T-cell (primary cell): ENCODE measurements at regions of chr17 and their contacts with region 1.

Region 1: GRCh38 chr17:68457539-68458259 is 403 bp upstream of the WIPI1 start:
- DNase-seq: peak; percentile 91 to 99 (median 97)
- ATAC-seq: peak; percentile 94 to 99 (median 98)
- H3K4me3 ChIP-seq: peak overlapping the region; percentile 39 to 59
- H3K4me3 Mint-ChIP-seq: peak overlapping the region; percentile 76 to 82 (median 77)
- H3K27ac ChIP-seq: peak overlapping the region; percentile 47
- H3K27ac Mint-ChIP-seq: peak overlapping the region; percentile 78 to 87
- H3K4me1 ChIP-seq: peaks cover 30 to 48% of the 10 kb centered on the region in 2 experiments
- H3K4me1 Mint-ChIP-seq: peaks cover 55 to 64% (median 61%) of the 10 kb centered on the region in 3 donors
- H3K27me3 ChIP-seq: no peaks in the 10 kb centered on the region
- H3K27me3 Mint-ChIP-seq: no peaks in the 10 kb centered on the region

Region 2: GRCh38 chr17:68179926-68180285 is 277.8 kb before region 1 on chr17:
- CTCF ChIA-PET with region 1: interaction called, 4 to 14 read pairs
- POLR2A ChIA-PET with region 1: interaction called in 1 of 2 experiments, 10 read pairs
- DNase-seq: no peak
- ATAC-seq: no peak
- H3K4me3 ChIP-seq: no peak overlapping the region
- H3K4me3 Mint-ChIP-seq: no peak overlapping the region
- H3K27ac ChIP-seq: peak overlapping the region; percentile 34
- H3K27ac Mint-ChIP-seq: no peak overlapping the region
- H3K4me1 ChIP-seq: peaks cover 30 to 42% of the 10 kb centered on the region in 2 experiments
- H3K4me1 Mint-ChIP-seq: peaks cover 40 to 54% (median 51%) of the 10 kb centered on the region in 3 donors
- H3K27me3 ChIP-seq: no peaks in the 10 kb centered on the region
- H3K27me3 Mint-ChIP-seq: no peaks in the 10 kb centered on the region

Region 3: GRCh38 chr17:68247445-68248198 is 210.1 kb before region 1 on chr17 and contains the start of gene AMZ2:
- CTCF ChIA-PET with region 1: interaction called in 1 of 2 experiments, 14 read pairs
- POLR2A ChIA-PET with region 1: interaction called, 3 to 5 read pairs
- DNase-seq: peak; percentile 88 to 99 (median 94)
- ATAC-seq: peak; percentile 88 to 95 (median 91)
- H3K4me3 ChIP-seq: peak within 1 kb of the TSS; percentile 69 to 77
- H3K4me3 Mint-ChIP-seq: peak within 1 kb of the TSS; percentile 78 to 93 (median 84)
- H3K27ac ChIP-seq: peak within 1 kb of the TSS; percentile 97
- H3K27ac Mint-ChIP-seq: peak within 1 kb of the TSS; percentile 92 to 99
- H3K4me1 ChIP-seq: peaks cover 4 to 42% of the 10 kb centered on the region in 2 experiments
- H3K4me1 Mint-ChIP-seq: peaks cover 30 to 56% (median 36%) of the 10 kb centered on the region in 3 donors
- H3K27me3 ChIP-seq: no peaks in the 10 kb centered on the region
- H3K27me3 Mint-ChIP-seq: no peaks in the 10 kb centered on the region
- total RNA-seq, gene AMZ2: 50.9 to 81.8 (median 60.5) TPM

Region 4: DNA sequence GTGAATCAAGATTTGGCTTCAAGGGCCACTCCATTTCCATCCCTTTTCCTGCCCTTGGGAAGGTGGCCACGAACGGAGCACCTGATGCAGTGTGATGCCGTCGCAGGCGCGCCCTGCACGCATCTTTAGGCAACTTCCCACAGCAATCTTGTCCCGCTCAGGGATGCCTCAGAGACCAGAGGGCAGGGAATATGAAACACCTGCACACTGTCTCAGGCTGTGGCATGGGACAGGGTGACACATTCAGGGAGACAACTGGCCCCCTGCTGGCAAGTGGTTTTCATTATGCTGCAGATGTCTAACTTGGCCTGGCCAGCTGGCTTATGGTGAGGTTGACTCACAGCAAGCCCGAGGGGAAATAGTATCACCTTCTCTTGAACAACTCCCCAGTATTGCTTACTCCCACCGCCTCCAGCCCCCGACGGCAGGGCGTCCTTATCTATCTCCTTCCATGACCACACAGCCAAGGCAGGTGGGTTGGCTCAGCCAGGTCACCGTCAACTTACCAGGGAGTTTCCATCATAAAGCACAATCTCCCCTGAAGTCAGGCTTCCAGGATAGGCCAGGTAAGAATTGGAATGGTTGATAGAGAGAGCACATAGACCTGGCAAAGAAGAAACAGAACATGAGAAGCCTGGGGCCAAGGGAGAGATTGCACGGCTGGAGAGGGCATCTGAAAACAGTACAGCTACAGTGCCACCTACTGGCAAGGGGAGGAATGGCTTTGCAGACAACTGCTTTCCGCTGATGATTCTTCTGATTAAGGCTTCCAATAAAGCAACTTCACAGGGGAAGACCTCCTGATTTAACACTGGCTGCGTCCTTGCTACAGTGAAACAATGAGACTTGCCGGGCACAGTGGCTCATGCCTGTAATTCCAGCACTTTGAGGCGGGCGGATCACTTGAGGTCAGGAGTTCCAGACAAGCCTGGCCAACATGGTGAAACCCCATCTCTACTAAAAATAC is 21.5 kb before region 1 on chr17:
- CTCF ChIA-PET with region 1: interaction called, 5 to 22 read pairs
- POLR2A ChIA-PET with region 1: interaction called in 1 of 2 experiments, 3 read pairs
- DNase-seq: peak; percentile 56 to 93 (median 81)
- ATAC-seq: peak; percentile 69 to 76 (median 72)
- H3K4me3 ChIP-seq: no peak overlapping the region
- H3K4me3 Mint-ChIP-seq: peak overlapping the region; percentile 22 to 65 (median 34)
- H3K27ac ChIP-seq: no peak overlapping the region
- H3K27ac Mint-ChIP-seq: peak overlapping the region; percentile 80 to 97
- H3K4me1 ChIP-seq: peaks cover 17 to 43% of the 10 kb centered on the region in 2 experiments
- H3K4me1 Mint-ChIP-seq: peaks cover 52 to 58% (median 56%) of the 10 kb centered on the region in 3 donors
- H3K27me3 ChIP-seq: no peaks in the 10 kb centered on the region
- H3K27me3 Mint-ChIP-seq: no peaks in the 10 kb centered on the region

Region 5: DNA sequence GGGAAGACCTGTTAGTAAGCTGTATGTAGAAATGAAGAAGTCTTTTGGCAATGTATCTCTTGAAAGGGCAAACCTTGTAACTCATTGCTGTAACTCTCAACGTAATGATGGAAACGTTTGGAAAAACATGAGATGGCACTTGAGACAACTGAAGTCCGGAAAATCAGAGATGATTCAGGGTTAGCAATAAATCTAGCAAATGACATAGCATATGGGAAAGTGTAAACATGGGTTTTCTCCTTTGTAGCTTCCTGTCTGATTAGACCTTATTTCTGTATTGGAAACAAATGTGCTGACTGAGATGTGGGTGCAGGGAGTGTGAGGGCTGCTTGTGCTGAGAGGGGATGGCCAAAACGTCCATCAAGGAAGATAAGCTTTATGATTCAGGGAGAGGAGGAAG is 254.1 kb after region 1 on chr17:
- CTCF ChIA-PET with region 1: no interaction called
- POLR2A ChIA-PET with region 1: no interaction called
- DNase-seq: no peak
- ATAC-seq: no peak
- H3K4me3 ChIP-seq: no peak overlapping the region
- H3K4me3 Mint-ChIP-seq: no peak overlapping the region
- H3K27ac ChIP-seq: no peak overlapping the region
- H3K27ac Mint-ChIP-seq: no peak overlapping the region
- H3K4me1 ChIP-seq: no peaks in the 10 kb centered on the region
- H3K4me1 Mint-ChIP-seq: no peaks in the 10 kb centered on the region
- H3K27me3 ChIP-seq: peaks cover 0 to 13% of the 10 kb centered on the region in 2 experiments
- H3K27me3 Mint-ChIP-seq: peaks cover 34 to 38% of the 10 kb centered on the region in 2 donors